ENCODE measurements at regions of chr9 and their contacts with region 1.

Region 1: GRCh38 chr9:34178520-34179212 is at the start of gene UBAP1:
- DNase-seq: peak; percentile 89 to 98 (median 95)
- ATAC-seq: peak; percentile 98
- H3K4me3 ChIP-seq: peak within 1 kb of the TSS; percentile 88 to 93
- H3K4me3 Mint-ChIP-seq: peak within 1 kb of the TSS; percentile 97
- H3K27ac ChIP-seq: peak within 1 kb of the TSS; percentile 92 to 96
- H3K27ac Mint-ChIP-seq: peak within 1 kb of the TSS; percentile 98
- H3K4me1 ChIP-seq: peaks cover 9% of the 10 kb centered on the region
- H3K4me1 Mint-ChIP-seq: peaks cover 24% of the 10 kb centered on the region
- H3K27me3 ChIP-seq: no peaks in the 10 kb centered on the region
- H3K27me3 Mint-ChIP-seq: no peaks in the 10 kb centered on the region
- CTCF ChIP-seq: no peak
- total RNA-seq, gene UBAP1: 70.9 to 73.2 TPM

Region 2: GRCh38 chr9:33024966-33025571 is 1153.6 kb before region 1 on chr9 and contains the start of gene DNAJA1:
- CTCF ChIA-PET with region 1: no interaction called
- POLR2A ChIA-PET with region 1: no interaction called
- intact Hi-C with region 1: loop called in 1 of 2 experiments (anchors 5 kb)
- DNase-seq: peak; percentile 92 to 98 (median 96)
- ATAC-seq: peak; percentile 80
- H3K4me3 ChIP-seq: peak within 1 kb of the TSS; percentile 100
- H3K4me3 Mint-ChIP-seq: peak within 1 kb of the TSS; percentile 96
- H3K27ac ChIP-seq: peak within 1 kb of the TSS; percentile 100
- H3K27ac Mint-ChIP-seq: peak within 1 kb of the TSS; percentile 96
- H3K4me1 ChIP-seq: peaks cover 63% of the 10 kb centered on the region
- H3K4me1 Mint-ChIP-seq: peaks cover 70% of the 10 kb centered on the region
- H3K27me3 ChIP-seq: no peaks in the 10 kb centered on the region
- H3K27me3 Mint-ChIP-seq: no peaks in the 10 kb centered on the region
- CTCF ChIP-seq: no peak
- total RNA-seq, gene DNAJA1: 170 to 172 TPM

Region 3: GRCh38 chr9:33908749-33909148 is 269.9 kb before region 1 on chr9:
- CTCF ChIA-PET with region 1: no interaction called
- POLR2A ChIA-PET with region 1: no interaction called
- intact Hi-C with region 1: no loop called
- DNase-seq: no peak
- ATAC-seq: no peak
- H3K4me3 ChIP-seq: no peak overlapping the region
- H3K4me3 Mint-ChIP-seq: no peak overlapping the region
- H3K27ac ChIP-seq: no peak overlapping the region
- H3K27ac Mint-ChIP-seq: no peak overlapping the region
- H3K4me1 ChIP-seq: no peaks in the 10 kb centered on the region
- H3K4me1 Mint-ChIP-seq: peaks cover 22% of the 10 kb centered on the region
- H3K27me3 ChIP-seq: no peaks in the 10 kb centered on the region
- H3K27me3 Mint-ChIP-seq: no peaks in the 10 kb centered on the region
- CTCF ChIP-seq: no peak

Region 4: GRCh38 chr9:34048923-34049697 is 129.6 kb before region 1 on chr9:
- CTCF ChIA-PET with region 1: no interaction called
- POLR2A ChIA-PET with region 1: interaction called, 6 read pairs
- intact Hi-C with region 1: loop called (anchors 1 to 2 kb)
- DNase-seq: peak; percentile 92 to 99 (median 97)
- ATAC-seq: peak; percentile 81
- H3K4me3 ChIP-seq: peak overlapping the region; percentile 76 to 79
- H3K4me3 Mint-ChIP-seq: peak overlapping the region; percentile 97
- H3K27ac ChIP-seq: peak overlapping the region; percentile 87 to 95
- H3K27ac Mint-ChIP-seq: peak overlapping the region; percentile 100
- H3K4me1 ChIP-seq: peaks cover 23% of the 10 kb centered on the region
- H3K4me1 Mint-ChIP-seq: peaks cover 29% of the 10 kb centered on the region
- H3K27me3 ChIP-seq: no peaks in the 10 kb centered on the region
- H3K27me3 Mint-ChIP-seq: no peaks in the 10 kb centered on the region
- CTCF ChIP-seq: no peak

Region 5: DNA sequence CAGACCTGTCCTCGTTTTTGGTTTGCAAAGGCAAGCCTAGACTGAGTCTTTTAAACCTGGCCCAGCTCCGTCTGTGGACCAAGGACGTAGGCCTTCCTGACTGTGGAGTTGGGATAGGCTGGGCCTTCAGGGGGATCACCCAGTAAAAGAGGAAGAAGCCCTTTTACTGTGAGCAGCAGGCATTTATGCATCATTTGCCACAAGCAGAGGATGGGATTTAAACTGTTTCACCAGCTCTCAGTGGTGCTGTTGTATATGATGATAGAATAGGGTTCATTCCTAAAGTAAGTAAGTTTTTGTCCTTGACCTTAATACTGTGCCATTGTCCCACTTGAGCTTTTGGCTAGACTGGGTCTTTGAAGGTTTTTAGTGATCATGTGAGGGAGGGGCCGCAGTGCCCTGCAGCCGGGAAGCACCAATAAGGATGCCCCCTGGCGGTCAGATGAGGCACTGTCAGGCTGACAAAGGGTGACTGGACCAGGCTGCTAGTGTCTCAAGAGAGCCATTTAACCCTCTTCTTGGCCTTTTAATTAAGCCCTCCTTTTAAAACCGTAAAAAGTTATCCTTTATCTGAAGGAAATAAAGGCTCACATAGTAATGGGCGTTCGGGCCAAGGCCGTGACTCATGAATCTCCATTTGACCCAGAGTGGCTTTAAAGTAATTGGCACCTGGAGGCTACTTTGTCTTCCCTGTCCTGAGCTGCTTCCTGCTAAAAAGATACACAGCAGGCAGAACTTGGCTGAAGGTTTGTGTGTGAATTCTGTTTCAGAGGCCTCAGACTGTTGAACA is 74.2 kb after region 1 on chr9:
- CTCF ChIA-PET with region 1: interaction called, 3 read pairs
- POLR2A ChIA-PET with region 1: no interaction called
- intact Hi-C with region 1: loop called in 1 of 2 experiments (anchors 2 kb)
- DNase-seq: peak in 8 of 9 experiments; percentile 29 to 79 (median 66)
- ATAC-seq: peak; percentile 75
- H3K4me3 ChIP-seq: no peak overlapping the region
- H3K4me3 Mint-ChIP-seq: no peak overlapping the region
- H3K27ac ChIP-seq: no peak overlapping the region
- H3K27ac Mint-ChIP-seq: peak overlapping the region; percentile 52
- H3K4me1 ChIP-seq: peaks cover 23% of the 10 kb centered on the region
- H3K4me1 Mint-ChIP-seq: peaks cover 21% of the 10 kb centered on the region
- H3K27me3 ChIP-seq: no peaks in the 10 kb centered on the region
- H3K27me3 Mint-ChIP-seq: no peaks in the 10 kb centered on the region
- CTCF ChIP-seq: peak; percentile 92